ENCODE measurements at regions of chr22 and their contacts with region 1.

Region 1: GRCh38 chr22:37887610-37888378 is 18.3 kb upstream of the MICALL1 start:
- DNase-seq: no peak
- ATAC-seq: peak; percentile 78 to 80

Region 2: DNA sequence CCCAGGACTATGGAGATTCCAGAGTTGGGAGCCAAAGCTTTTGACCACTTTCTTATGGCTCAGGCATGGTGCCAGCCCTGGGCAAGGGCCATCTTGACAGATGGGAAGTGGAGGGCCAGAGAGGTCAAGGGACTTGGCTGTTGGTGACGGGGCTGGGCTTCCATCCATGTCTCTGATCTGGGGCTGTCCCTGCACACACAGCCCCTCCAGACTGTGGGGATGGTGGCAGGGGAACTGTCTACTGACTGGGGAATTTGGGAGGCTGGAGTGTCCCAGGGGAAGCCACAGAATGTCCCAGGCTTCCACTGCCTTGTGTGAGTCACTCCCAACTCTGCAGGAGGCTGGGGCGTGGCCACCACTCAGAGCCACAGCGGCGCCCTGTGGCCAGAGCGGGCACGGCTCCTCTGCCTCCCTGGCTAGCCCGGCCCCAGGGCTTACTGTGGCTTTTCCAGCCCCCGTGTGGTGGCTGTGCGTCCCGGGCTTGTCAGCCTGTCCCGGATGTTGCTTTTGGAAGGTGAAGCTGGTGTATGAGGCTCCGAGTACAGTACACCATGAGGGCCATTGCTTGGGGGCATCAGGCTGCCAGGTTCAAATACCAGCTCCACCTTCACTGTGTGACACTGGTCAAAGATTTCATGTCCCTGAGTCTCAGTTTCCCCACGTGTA is 46.0 kb after region 1 on chr22:
- intact Hi-C with region 1: loop called in 1 of 2 experiments (anchors 5 kb)
- DNase-seq: peak; percentile 91
- ATAC-seq: peak; percentile 96 to 98

Region 3: DNA sequence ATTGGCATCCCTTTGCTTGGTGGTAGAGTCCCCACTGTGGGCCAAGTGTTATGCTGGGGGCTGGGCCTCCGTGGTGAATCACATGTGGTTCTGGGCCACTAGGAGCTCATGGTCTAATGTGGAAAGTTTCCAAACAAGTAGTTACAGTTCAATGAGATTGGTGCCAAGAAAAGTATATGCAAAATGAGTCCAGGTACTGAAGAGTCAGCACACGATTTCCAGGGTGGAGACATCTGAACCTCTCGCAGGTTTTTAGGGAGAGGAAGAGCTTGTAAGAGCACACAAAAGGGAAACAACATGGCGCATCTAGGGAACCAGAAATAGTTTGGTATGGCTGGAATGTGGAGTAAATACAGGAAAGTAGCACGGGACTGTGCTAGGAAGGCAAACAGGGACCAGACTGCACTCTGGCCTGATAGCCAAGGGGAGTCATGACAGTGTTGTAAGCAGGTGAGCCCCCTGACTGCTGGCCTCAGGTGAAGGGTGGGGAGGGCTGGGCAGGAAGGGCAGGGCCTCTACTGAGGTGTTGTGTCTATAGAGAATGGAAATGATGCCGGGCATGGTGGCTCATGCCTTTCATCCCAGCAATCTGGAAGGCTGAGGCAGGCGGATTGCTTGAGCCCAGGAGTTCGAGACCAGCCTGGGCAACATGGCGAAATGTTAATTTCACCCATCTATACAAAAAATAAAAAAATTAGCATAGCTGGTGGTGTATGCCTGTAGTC is 78.3 kb after region 1 on chr22:
- intact Hi-C with region 1: loop called in 1 of 2 experiments (anchors 5 kb)
- DNase-seq: no peak
- ATAC-seq: peak; percentile 10 to 12

Measured in left cardiac atrium (tissue), 4 donors.